ENCODE measurements at regions of chr2 and their contacts with region 1.

Region 1: DNA sequence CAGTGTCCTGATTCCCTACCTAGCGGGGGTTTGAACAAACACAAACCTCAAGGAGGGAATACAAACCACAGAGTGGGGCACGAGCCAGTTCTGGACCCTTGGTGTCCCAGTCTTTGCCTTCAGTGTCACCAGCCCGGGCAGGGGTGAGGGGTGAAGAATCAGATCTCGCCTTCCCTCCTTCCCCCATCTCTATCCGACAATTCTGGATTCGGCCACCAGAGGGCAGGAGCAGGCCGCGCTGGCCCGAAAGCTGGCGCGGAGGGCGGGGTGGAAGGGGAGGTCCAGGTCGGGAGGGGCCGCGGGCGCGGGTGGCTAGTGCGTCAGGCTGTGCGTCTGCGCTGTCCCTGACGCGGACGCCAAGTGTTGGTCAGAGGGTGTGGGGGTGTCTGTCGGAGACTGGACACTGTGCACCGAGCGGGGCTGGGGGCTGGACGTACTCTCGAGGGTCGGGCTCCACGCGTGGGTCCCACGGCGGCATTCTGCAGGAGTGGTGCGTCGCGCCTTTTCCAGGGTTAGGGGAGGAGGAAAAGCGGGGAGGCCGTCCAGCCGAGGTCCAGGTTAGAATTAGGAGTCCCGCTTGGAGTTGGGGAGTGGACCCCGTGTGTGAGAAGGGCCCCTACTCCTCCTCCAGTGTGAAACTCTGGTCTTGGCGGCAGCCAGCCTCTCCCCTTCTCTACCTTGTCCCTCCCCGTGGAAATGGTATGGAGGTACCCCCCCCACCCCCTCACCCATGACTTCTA is 2.9 kb upstream of the CRYBA2 start:
- DNase-seq: peak; percentile 77
- ATAC-seq: peak; percentile 92
- H3K4me3 ChIP-seq: peak overlapping the region; percentile 39
- H3K27ac ChIP-seq: no peak overlapping the region
- H3K4me1 ChIP-seq: no peaks in the 10 kb centered on the region; the same call in 1 of the 2 replicates
- H3K27me3 ChIP-seq: peaks cover 85% of the 10 kb centered on the region
- CTCF ChIP-seq: peak; percentile 85
- POLR2A ChIP-seq: 0 out of 2 replicates have a peak, but pooled peaks have one; percentile 64
- RAD21 ChIP-seq: peak; percentile 75

Region 2: DNA sequence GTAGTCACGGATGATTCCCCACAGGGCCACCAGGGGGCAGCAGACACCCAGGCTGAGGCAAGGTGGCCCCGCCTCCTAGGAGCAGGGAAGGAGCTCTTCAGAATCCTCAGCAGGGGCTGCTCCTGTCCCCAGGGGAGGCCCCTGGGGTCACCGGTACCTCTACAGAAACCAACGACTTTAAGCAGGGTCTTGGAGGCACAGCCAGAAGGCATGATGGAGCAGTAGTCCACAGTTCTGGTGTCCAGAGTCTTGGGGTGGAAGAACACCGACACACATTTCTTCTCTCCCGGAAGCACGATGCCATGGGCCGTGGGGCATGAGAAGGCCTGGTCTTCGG is 33.7 kb after region 1 on chr2:
- CTCF ChIA-PET with region 1: interaction called, 3 read pairs
- POLR2A ChIA-PET with region 1: no interaction called
- dilution Hi-C with region 1: no loop called
- in situ Hi-C with region 1: no loop called
- intact Hi-C with region 1: loop called (anchors 1 kb)
- DNase-seq: peak; percentile 63
- ATAC-seq: peak; percentile 100
- H3K4me3 ChIP-seq: no peak overlapping the region
- H3K27ac ChIP-seq: no peak overlapping the region
- H3K4me1 ChIP-seq: no peaks in the 10 kb centered on the region
- H3K27me3 ChIP-seq: peaks cover 48% of the 10 kb centered on the region
- CTCF ChIP-seq: peak; percentile 91
- POLR2A ChIP-seq: no peak
- RAD21 ChIP-seq: peak; percentile 87

Measured in IMR-90 (cell line).